ENCODE measurements at regions of chr7 and their contacts with region 1.

Region 1: DNA sequence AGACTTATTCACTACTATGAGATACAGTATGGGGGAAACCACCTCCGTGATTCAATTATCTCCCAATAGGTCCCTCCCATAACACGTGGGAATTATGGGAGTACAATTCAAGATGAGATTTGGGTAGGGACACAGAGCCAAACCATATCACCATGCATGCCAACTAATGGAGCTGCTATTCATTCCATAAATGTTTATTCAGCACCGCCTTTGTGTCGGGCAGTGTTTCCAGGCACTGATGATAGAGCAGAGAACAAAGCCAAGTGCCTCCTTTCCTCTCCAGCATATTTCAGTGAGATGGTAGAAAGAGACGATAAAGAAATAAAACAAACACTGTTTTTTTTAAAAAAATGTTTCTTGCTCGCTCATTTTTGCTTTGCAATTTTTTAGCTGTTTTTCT is 295.9 kb upstream of the FOXK1 start:
- DNase-seq: no peak
- H3K4me3 ChIP-seq: no peak overlapping the region
- H3K27ac ChIP-seq: no peak overlapping the region
- H3K4me1 ChIP-seq: no peaks in the 10 kb centered on the region
- H3K27me3 ChIP-seq: no peaks in the 10 kb centered on the region
- CTCF ChIP-seq: no peak

Region 2: GRCh38 chr7:3425087-3425486 is 961.1 kb before region 1 on chr7:
- CTCF ChIA-PET with region 1: interaction called, 14 read pairs
- dilution Hi-C with region 1: no loop called
- in situ Hi-C with region 1: no loop called
- intact Hi-C with region 1: no loop called
- DNase-seq: no peak
- H3K4me3 ChIP-seq: no peak overlapping the region
- H3K27ac ChIP-seq: no peak overlapping the region
- H3K4me1 ChIP-seq: peaks cover 2% of the 10 kb centered on the region
- H3K27me3 ChIP-seq: no peaks in the 10 kb centered on the region
- CTCF ChIP-seq: no peak

Region 3: GRCh38 chr7:4297165-4297917 is 88.8 kb before region 1 on chr7:
- CTCF ChIA-PET with region 1: no interaction called
- dilution Hi-C with region 1: no loop called
- in situ Hi-C with region 1: no loop called
- intact Hi-C with region 1: no loop called
- DNase-seq: no peak
- H3K4me3 ChIP-seq: no peak overlapping the region
- H3K27ac ChIP-seq: no peak overlapping the region
- H3K4me1 ChIP-seq: no peaks in the 10 kb centered on the region
- H3K27me3 ChIP-seq: no peaks in the 10 kb centered on the region
- CTCF ChIP-seq: no peak

Region 4: GRCh38 chr7:4439444-4439843 is 53.3 kb after region 1 on chr7:
- CTCF ChIA-PET with region 1: no interaction called
- dilution Hi-C with region 1: no loop called
- in situ Hi-C with region 1: no loop called
- intact Hi-C with region 1: no loop called
- DNase-seq: no peak
- H3K4me3 ChIP-seq: no peak overlapping the region
- H3K27ac ChIP-seq: no peak overlapping the region
- H3K4me1 ChIP-seq: no peaks in the 10 kb centered on the region
- H3K27me3 ChIP-seq: no peaks in the 10 kb centered on the region
- CTCF ChIP-seq: no peak

Measured in mammary epithelial cell (primary cell).